Dorsolateral prefrontal cortex (tissue), 120 donors: ENCODE measurements at regions of chr1 and their contacts with region 1.

Region 1: GRCh38 chr1:226973898-226974543 is 33.9 kb downstream of the COQ8A start:
- DNase-seq: no peak
- H3K4me3 ChIP-seq: no peak overlapping the region
- H3K27ac ChIP-seq: peak overlapping the region; percentile 74 to 99 (median 93)
- H3K27me3 ChIP-seq: no peaks in the 10 kb centered on the region
- CTCF ChIP-seq: no peak

Region 2: DNA sequence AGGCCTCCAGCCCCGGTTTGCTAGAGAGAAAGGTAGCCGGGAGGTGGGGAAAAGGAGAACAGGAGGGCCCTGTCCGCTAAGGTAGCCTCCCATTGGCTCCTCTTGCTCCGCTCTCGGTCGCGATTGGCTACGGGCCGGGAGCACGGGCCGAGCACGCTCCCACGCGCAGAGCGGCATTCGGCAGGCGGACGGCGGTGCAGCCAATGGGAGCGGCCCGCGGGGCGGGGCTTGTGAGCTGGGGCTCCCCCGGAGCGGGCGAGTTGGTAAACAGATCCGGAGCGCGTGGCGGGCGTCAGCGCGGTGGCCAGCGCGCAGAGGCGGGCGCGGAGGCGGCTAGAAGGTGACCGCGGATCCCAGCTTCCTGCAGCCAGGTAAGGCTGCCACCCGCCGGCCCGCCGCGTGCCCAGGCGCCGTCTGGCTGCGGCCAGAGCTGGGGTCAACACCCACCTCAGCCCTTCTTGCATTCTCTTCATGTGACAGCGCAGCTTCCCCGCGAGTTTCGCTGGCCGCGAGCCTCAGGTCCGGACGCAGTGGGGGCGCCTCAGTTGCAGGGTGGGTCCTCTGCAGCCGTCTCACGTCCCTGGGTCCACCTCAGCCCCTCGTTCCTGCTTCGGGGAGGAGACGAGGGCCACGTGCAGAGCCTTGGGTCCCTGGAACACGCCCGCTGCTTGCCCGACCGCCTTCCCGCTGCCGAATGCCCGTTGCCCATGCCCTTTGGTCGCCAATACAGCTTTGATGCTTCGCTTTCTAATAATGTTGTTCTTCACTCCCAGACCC is 33.8 kb before region 1 on chr1 and contains the start of gene COQ8A:
- intact Hi-C with region 1: loop called (anchors 2 to 5 kb)
- DNase-seq: peak; percentile 98 to 100 (median 99)
- H3K4me3 ChIP-seq: peak within 1 kb of the TSS; percentile 63 to 100 (median 91)
- H3K27ac ChIP-seq: peak within 1 kb of the TSS; percentile 88 to 100 (median 99)
- H3K27me3 ChIP-seq: no peaks in the 10 kb centered on the region
- CTCF ChIP-seq: peak in 16 of 56 donors; percentile 4 to 41 (median 21)
- total RNA-seq, gene COQ8A: 27.2 to 59.8 (median 44.7) TPM